ENCODE measurements at regions of chr12 and their contacts with region 1.

Region 1: GRCh38 chr12:124713436-124714082 is 146.1 kb upstream of the NCOR2 start:
- DNase-seq: peak; percentile 46
- ATAC-seq: peak; percentile 90
- H3K4me3 Mint-ChIP-seq: peak overlapping the region; percentile 52
- H3K27ac Mint-ChIP-seq: peak overlapping the region; percentile 77
- H3K4me1 Mint-ChIP-seq: peaks cover 19% of the 10 kb centered on the region
- H3K27me3 Mint-ChIP-seq: no peaks in the 10 kb centered on the region
- CTCF ChIP-seq: no peak

Region 2: DNA sequence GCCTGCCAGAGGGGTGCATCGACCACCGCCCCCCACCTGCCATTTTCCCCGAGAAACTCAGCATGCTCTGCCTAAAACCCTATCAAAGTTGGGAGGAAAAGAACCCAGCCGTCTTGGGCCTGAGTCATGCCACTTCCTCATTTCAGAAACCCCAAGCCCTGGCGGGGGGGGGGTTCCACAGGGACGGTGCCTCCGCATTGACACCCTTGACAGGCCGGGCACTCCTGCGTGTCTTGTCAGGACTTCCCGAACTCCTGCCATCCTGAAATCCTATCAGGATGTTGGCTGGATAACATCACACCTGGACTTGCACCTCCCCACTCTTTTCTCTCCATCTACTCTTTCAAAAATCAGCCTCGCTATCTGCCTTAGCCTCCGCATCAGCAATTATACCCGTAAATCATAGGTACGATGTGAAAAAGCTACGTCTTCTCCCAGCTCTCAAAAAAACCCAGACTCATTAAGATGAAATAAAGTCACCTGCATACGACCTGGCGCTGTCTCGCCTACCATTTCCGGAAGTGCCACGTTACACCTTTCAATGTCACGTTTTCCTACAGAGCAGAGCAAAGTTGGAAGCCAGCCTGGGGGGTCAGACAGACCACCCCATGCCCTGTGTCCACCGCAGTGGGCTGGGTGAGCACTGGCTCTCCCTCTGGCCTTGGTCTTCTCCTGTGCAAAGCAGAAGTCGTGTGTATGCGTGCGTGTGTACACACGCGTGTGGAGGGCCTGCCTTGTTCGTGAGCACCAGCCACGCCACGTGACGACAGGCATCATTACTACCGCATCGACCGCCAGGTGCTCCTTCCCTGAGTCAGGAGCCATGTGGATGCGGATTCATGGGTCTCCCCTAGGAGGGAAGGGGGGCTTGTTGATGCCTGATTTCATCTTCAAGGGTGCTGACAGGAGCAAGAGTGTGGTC is 322.0 kb before region 1 on chr12:
- CTCF ChIA-PET with region 1: no interaction called
- POLR2A ChIA-PET with region 1: no interaction called
- intact Hi-C with region 1: loop called (anchors 1 kb)
- DNase-seq: peak; percentile 73
- ATAC-seq: peak; percentile 77
- H3K4me3 Mint-ChIP-seq: peak overlapping the region; percentile 83
- H3K27ac Mint-ChIP-seq: peak overlapping the region; percentile 79
- H3K4me1 Mint-ChIP-seq: peaks cover 47% of the 10 kb centered on the region
- H3K27me3 Mint-ChIP-seq: no peaks in the 10 kb centered on the region
- CTCF ChIP-seq: no peak

Region 3: DNA sequence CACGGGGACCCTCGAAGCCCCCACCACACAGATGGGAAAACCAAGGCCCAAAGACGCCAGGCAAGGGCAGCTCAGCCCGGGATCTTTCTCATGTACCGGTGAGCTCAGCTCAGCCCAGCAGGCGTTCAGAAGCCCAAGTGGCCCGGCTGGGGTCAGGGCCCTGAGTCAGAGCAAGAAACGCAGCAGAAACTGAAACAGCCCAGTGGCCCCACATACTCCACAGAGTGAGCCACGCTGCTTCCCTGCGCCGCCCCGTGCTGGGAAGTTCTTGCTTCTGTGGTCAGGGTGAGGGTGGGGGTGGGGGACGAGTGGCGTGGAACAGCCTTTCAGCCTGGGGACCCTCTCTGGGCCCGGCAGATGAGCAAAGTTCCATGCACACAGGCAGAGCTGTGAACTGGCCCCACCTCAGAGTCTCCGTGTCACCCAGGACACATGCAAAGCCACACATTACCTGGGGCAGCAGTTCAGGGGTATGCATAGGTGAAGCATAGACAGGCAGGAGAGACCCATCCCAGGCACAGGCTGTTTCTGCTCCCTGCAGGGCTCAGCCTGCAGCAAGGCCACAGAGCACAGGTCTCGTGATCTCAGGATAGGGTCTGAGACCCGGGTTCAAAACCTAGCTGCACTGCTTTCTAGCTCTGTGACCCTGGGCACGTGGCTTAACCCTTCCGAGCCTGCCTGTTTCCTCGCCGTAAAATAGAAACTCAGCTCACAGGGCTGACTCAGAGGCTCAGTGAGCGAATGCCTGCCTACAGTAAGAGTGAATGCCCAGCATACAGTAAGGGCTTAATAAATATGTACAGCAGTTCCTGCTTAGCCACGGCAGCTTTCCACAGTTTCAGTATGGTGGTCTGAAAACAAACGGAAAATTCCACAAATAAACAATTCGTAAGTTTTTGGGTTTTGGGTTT is 167.8 kb before region 1 on chr12:
- CTCF ChIA-PET with region 1: no interaction called
- POLR2A ChIA-PET with region 1: no interaction called
- intact Hi-C with region 1: loop called (anchors 5 kb)
- DNase-seq: peak; percentile 49
- ATAC-seq: peak; percentile 75
- H3K4me3 Mint-ChIP-seq: peak overlapping the region; percentile 65
- H3K27ac Mint-ChIP-seq: peak overlapping the region; percentile 69
- H3K4me1 Mint-ChIP-seq: peaks cover 70% of the 10 kb centered on the region
- H3K27me3 Mint-ChIP-seq: no peaks in the 10 kb centered on the region
- CTCF ChIP-seq: no peak

Region 4: DNA sequence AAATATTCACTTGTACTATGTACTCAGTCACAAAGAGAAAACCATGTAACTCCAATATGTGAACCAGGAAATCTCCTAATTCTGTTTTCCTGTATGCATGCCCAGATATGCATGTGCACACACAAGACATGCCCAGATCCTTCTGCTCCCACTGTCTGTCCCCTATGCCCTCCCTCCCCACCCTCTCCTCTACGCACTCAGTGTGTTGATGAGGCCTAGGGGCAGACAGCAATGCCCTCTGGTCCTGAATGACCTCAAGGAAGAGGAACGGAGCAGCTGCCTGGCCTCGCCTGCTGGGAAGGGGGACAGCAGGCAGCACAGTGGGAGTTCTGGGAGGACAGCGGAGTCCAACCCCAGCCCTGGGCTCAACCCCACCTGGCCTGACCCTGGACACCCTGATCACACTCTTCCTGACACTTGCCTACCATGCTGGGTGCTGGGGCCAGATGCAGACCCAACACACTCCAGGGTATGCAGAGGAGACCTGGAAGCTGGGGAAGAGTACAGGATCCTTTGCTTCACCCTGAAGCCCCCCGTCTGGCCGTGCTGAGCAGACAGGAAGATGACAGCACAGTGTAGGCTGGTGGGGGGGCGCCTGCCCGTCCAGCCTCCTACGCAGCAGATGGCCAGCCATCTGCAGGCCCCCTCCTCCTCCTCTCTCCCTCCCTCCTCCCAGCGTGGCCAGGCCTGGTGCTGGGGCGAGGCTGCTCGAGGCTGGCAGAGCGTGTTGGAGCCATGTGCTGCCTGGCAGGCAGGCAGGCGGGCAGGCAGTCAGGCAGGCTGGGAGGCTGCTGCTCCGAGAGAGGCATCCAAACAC is 39.5 kb before region 1 on chr12:
- CTCF ChIA-PET with region 1: no interaction called
- POLR2A ChIA-PET with region 1: no interaction called
- intact Hi-C with region 1: no loop called
- DNase-seq: no peak
- ATAC-seq: no peak
- H3K4me3 Mint-ChIP-seq: no peak overlapping the region
- H3K27ac Mint-ChIP-seq: no peak overlapping the region
- H3K4me1 Mint-ChIP-seq: peaks cover 13% of the 10 kb centered on the region
- H3K27me3 Mint-ChIP-seq: no peaks in the 10 kb centered on the region
- CTCF ChIP-seq: no peak

Region 5: DNA sequence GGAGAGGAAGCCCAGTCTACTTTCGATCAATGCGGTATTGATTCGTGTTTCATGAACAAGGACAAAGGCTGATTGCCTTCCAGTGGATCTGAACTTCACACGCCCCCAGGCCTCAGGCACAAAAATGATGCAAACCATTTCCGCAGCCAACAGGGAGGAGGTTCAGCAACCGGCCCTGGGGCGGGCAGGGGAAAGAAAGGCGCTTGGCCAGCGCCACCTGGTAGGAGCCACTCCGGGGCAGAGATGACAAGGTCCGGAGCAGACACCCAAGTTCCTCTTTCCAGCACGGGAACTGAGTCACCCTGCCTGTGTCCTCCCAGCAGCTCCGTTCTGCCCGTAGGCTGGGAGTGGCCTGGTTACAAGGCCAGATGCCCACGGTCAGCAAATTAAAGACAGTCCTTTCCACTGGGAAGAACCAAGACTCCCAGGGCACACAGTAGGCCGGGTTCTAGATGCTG is 13.7 kb after region 1 on chr12:
- CTCF ChIA-PET with region 1: no interaction called
- POLR2A ChIA-PET with region 1: no interaction called
- intact Hi-C with region 1: loop called (anchors 1 kb)
- DNase-seq: peak; percentile 24
- ATAC-seq: peak; percentile 93
- H3K4me3 Mint-ChIP-seq: no peak overlapping the region
- H3K27ac Mint-ChIP-seq: no peak overlapping the region
- H3K4me1 Mint-ChIP-seq: peaks cover 7% of the 10 kb centered on the region
- H3K27me3 Mint-ChIP-seq: peaks cover 4% of the 10 kb centered on the region
- CTCF ChIP-seq: no peak

Region 6: DNA sequence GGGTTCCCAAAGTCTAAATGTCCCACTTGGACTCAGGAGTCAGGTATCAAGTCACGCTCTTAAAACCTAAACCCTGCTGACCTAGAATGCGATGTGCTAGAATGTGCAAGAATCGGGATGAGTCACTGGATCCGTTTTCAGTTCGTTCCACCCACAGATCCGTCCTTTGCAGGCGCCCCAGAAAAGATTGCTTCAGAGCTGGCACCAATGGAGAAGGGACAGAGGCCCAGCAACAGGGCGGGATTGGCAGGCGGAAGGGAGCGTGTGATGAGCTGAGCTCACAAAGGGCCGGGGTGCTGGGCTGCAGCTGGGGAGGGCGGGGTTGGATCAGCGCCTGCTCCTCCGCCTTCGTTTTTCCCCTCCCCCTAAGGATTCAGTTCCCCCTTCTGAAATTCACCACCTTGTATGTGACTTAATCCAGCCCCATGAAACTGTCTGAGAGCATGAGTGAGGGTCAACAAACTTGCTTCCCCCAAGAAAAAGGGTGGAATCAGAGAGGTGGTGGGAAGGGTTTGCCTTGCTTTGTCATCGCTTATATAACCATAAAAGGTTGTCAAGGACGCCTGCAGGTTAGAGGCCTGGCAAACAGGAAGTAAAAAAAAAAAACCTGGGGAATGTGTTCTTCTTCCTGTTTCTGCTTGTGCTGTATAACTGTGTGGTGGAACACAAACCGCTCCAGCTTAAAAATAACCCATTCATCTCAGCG is 203.7 kb after region 1 on chr12:
- CTCF ChIA-PET with region 1: no interaction called
- POLR2A ChIA-PET with region 1: interaction called, 3 read pairs
- intact Hi-C with region 1: loop called (anchors 5 kb)
- DNase-seq: peak; percentile 77
- ATAC-seq: peak; percentile 63
- H3K4me3 Mint-ChIP-seq: peak overlapping the region; percentile 100
- H3K27ac Mint-ChIP-seq: peak overlapping the region; percentile 100
- H3K4me1 Mint-ChIP-seq: peaks cover 91% of the 10 kb centered on the region
- H3K27me3 Mint-ChIP-seq: no peaks in the 10 kb centered on the region
- CTCF ChIP-seq: no peak

Region 7: GRCh38 chr12:125092872-125093680 is 379.5 kb after region 1 on chr12:
- CTCF ChIA-PET with region 1: no interaction called
- POLR2A ChIA-PET with region 1: no interaction called
- intact Hi-C with region 1: no loop called
- DNase-seq: no peak
- ATAC-seq: no peak
- H3K4me3 Mint-ChIP-seq: no peak overlapping the region
- H3K27ac Mint-ChIP-seq: no peak overlapping the region
- H3K4me1 Mint-ChIP-seq: no peaks in the 10 kb centered on the region
- H3K27me3 Mint-ChIP-seq: no peaks in the 10 kb centered on the region
- CTCF ChIP-seq: no peak